ENCODE measurements at regions of chr17 and their contacts with region 1.

Region 1: GRCh38 chr17:4891411-4892342 is 7.7 kb upstream of the C17orf107 start:
- H3K4me3 Mint-ChIP-seq: no peak overlapping the region
- H3K27ac Mint-ChIP-seq: no peak overlapping the region
- H3K4me1 Mint-ChIP-seq: peaks cover 36% of the 10 kb centered on the region
- H3K27me3 Mint-ChIP-seq: no peaks in the 10 kb centered on the region

Region 2: DNA sequence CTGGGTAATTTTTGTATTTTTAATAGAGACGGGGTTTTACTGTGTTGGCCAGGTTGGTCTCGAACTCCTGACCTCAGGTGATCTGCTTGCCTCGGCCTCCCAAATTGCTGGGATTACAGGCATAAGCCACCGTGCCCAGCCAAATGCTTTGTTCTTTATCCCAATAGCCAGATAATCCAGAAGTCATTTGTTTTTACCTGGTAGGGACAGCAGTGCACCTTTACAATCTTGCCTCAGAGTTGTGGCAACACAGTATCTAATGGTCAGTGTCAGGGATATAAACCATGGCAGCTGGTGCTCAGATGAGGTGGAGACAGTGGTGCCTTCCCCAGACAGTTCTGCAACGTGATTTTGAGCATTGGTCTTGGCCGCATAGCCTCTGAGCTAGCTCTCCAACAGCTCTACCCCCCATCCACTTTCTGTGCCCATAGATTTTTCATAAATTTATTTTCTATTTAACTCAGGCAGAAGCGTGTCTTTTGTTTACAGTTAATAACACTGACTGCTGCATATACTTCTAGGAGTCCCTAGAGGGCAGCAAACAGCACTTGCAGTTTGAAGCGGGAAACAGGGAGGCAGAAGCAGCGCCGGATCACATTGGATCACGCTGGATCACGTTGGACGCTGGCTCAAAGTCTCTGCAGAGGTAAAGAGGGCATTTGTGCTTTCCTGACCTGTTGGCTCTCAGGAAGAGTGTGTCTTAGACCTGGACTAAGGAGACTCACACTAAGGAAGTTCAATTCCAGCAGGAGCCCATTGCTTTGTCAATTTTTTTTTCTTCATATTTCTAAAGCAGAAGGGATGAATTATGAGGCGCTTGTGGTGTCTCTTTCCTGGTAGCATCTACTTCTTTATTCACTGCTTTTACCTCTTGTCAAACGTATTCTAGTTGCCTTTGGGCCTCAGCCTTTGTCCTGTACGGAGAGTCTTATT is 326.2 kb before region 1 on chr17:
- intact Hi-C with region 1: loop called (anchors 2 kb)
- H3K4me3 Mint-ChIP-seq: no peak overlapping the region
- H3K27ac Mint-ChIP-seq: no peak overlapping the region
- H3K4me1 Mint-ChIP-seq: peaks cover 30% of the 10 kb centered on the region
- H3K27me3 Mint-ChIP-seq: peaks cover 12% of the 10 kb centered on the region

Region 3: DNA sequence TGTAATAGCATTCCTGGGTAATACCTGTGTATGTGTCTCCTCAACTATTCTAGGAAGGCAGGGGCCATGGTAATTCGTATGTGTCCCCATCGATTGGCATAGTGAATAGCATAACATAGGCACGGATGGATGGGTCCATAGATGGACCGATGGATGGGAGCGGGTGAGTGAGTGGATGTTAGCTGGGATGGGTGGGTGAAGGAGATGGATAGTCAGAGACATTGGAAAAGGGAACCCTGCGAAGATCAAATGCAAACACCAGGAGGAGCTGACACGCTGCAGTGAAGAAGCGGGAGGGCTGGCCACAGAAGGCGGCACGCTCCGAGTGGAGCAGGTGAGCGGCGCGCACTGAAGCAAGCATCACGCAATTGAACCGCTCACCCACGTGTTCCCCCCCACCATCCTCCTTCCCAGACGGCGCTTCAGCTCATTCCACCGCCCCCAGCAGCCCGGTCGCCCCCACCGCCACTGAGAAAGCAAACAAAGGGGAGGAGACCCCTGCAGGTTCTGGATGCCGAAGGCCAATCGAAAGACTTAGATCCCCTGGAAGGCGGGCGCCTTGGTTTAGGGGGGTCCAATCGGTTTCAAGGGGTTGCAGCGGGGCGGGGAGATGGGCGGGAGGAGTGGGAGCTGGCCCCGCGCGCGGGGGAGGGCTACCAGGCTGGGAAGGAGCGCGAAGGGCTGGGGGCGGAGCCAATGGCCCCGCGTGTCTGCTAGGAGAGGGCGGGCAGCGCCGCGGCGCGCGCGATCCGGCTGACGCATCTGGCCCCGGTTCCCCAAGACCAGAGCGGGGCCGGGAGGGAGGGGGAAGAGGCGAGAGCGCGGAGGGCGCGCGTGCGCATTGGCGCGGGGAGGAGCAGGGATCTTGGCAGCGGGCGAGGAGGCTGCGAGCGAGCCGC is 181.6 kb before region 1 on chr17 and contains the start of gene ARRB2:
- intact Hi-C with region 1: loop called (anchors 1 kb)
- H3K4me3 Mint-ChIP-seq: peak within 1 kb of the TSS; percentile 86
- H3K27ac Mint-ChIP-seq: peak within 1 kb of the TSS; percentile 95
- H3K4me1 Mint-ChIP-seq: peaks cover 49% of the 10 kb centered on the region
- H3K27me3 Mint-ChIP-seq: no peaks in the 10 kb centered on the region

Region 4: GRCh38 chr17:4789901-4790704 is 101.6 kb before region 1 on chr17:
- intact Hi-C with region 1: loop called (anchors 2 kb)
- H3K4me3 Mint-ChIP-seq: peak overlapping the region; percentile 84
- H3K27ac Mint-ChIP-seq: peak overlapping the region; percentile 94
- H3K4me1 Mint-ChIP-seq: peaks cover 57% of the 10 kb centered on the region
- H3K27me3 Mint-ChIP-seq: peaks cover 42% of the 10 kb centered on the region

Measured in dendritic cell treated with granulocyte-macrophage colony-stimulating factor and Interleukin-4, amounts not matched to agents 40 ng/mL and 50 ng/mL, for 4 days (primary cell).